Right cardiac atrium (tissue), 5 donors: ENCODE measurements at regions of chr7 and their contacts with region 1.

Region 1: GRCh38 chr7:103573479-103574058 is 127.6 kb upstream of the SLC26A5 start:
- DNase-seq: no peak
- ATAC-seq: no peak
- H3K4me3 ChIP-seq: no peak overlapping the region
- H3K27ac ChIP-seq: no peak overlapping the region
- H3K4me1 ChIP-seq: no peaks in the 10 kb centered on the region
- H3K27me3 ChIP-seq: no peaks in the 10 kb centered on the region

Region 2: DNA sequence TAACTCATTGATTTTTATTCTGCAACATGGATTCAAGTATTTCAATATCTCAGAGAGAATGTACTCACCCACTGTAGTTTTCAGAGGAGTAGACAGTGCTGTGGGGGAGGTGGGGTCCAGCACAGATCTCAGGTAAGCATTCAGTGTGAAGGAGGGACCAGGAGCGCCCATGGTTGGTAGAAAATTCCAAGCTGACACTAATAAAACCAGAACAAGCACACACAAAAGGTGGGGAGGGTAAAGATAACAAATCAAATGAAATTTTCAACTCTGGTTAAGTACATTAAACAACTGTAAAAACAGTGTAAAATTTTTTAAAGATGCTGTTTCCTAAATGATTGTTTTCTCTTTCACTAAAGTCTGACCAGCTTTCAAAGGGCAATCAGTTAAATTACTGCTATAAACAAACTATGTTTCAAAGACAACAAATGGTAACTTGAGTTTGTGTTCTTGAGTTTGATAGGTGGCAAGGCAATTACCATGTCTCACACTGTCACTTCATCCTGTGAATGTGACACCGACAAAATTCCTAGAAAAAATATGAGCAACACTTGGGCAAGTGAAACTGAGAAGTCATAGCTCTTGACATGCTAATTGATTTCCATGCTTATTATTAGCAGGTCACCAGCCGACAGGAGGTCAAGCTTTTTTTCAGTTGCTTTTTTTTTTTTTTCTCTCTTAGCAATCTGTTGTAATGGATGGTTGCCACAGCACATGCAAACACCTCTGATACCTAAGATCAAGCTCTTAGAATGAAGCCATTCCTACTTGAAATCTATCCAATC is 78.2 kb after region 1 on chr7:
- intact Hi-C with region 1: no loop called
- DNase-seq: no peak
- ATAC-seq: peak in 1 of 2 donors; percentile 28
- H3K4me3 ChIP-seq: no peak overlapping the region
- H3K27ac ChIP-seq: no peak overlapping the region
- H3K4me1 ChIP-seq: no peaks in the 10 kb centered on the region
- H3K27me3 ChIP-seq: no peaks in the 10 kb centered on the region

Region 3: GRCh38 chr7:103914147-103914899 is 340.8 kb after region 1 on chr7:
- intact Hi-C with region 1: no loop called
- DNase-seq: no peak
- ATAC-seq: no peak
- H3K4me3 ChIP-seq: no peak overlapping the region
- H3K27ac ChIP-seq: no peak overlapping the region
- H3K4me1 ChIP-seq: no peaks in the 10 kb centered on the region
- H3K27me3 ChIP-seq: no peaks in the 10 kb centered on the region

Region 4: GRCh38 chr7:104149822-104150221 is 576.3 kb after region 1 on chr7:
- intact Hi-C with region 1: loop called in 3 of 4 experiments (anchors 5 to 10 kb)
- DNase-seq: no peak
- ATAC-seq: no peak
- H3K4me3 ChIP-seq: no peak overlapping the region
- H3K27ac ChIP-seq: no peak overlapping the region
- H3K4me1 ChIP-seq: no peaks in the 10 kb centered on the region
- H3K27me3 ChIP-seq: no peaks in the 10 kb centered on the region

Region 5: GRCh38 chr7:104156842-104157277 is 583.3 kb after region 1 on chr7:
- intact Hi-C with region 1: loop called in 3 of 4 experiments (anchors 5 to 10 kb)
- DNase-seq: no peak
- ATAC-seq: no peak
- H3K4me3 ChIP-seq: no peak overlapping the region
- H3K27ac ChIP-seq: no peak overlapping the region
- H3K4me1 ChIP-seq: no peaks in the 10 kb centered on the region
- H3K27me3 ChIP-seq: no peaks in the 10 kb centered on the region